Activated CD4-positive, alpha-beta memory T cell treated with anti-CD3 and anti-CD28 coated beads for 36 hours (primary cell): ENCODE measurements at regions of chr1 and their contacts with region 1.

Region 1: GRCh38 chr1:18913065-18913835 is 10.9 kb upstream of the ALDH4A1 start:
- DNase-seq: peak; percentile 84
- H3K4me3 Mint-ChIP-seq: no peak overlapping the region
- H3K27ac Mint-ChIP-seq: peak overlapping the region; percentile 81
- H3K4me1 Mint-ChIP-seq: peaks cover 17% of the 10 kb centered on the region
- H3K27me3 Mint-ChIP-seq: no peaks in the 10 kb centered on the region

Region 2: GRCh38 chr1:18926315-18927081 is 13.2 kb after region 1 on chr1:
- CTCF ChIA-PET with region 1: interaction called, 147 read pairs
- POLR2A ChIA-PET with region 1: interaction called, 14 read pairs
- intact Hi-C with region 1: loop called (anchors 1 kb)
- DNase-seq: peak; percentile 94
- H3K4me3 Mint-ChIP-seq: peak overlapping the region; percentile 79
- H3K27ac Mint-ChIP-seq: peak overlapping the region; percentile 100
- H3K4me1 Mint-ChIP-seq: peaks cover 79% of the 10 kb centered on the region
- H3K27me3 Mint-ChIP-seq: no peaks in the 10 kb centered on the region

Region 3: GRCh38 chr1:18956369-18957135 is 43.3 kb after region 1 on chr1 and contains the start of gene IFFO2:
- CTCF ChIA-PET with region 1: interaction called, 60 read pairs
- POLR2A ChIA-PET with region 1: interaction called, 4 read pairs
- intact Hi-C with region 1: no loop called
- DNase-seq: peak; percentile 98
- H3K4me3 Mint-ChIP-seq: peak within 1 kb of the TSS; percentile 84
- H3K27ac Mint-ChIP-seq: peak within 1 kb of the TSS; percentile 71
- H3K4me1 Mint-ChIP-seq: peaks cover 44% of the 10 kb centered on the region
- H3K27me3 Mint-ChIP-seq: peaks cover 2% of the 10 kb centered on the region
- total RNA-seq, gene IFFO2: 40.4 to 42.0 TPM

Region 4: GRCh38 chr1:18972531-18972930 is 59.3 kb after region 1 on chr1:
- CTCF ChIA-PET with region 1: interaction called, 35 read pairs
- POLR2A ChIA-PET with region 1: no interaction called
- intact Hi-C with region 1: no loop called
- DNase-seq: no peak
- H3K4me3 Mint-ChIP-seq: no peak overlapping the region
- H3K27ac Mint-ChIP-seq: no peak overlapping the region
- H3K4me1 Mint-ChIP-seq: peaks cover 9% of the 10 kb centered on the region
- H3K27me3 Mint-ChIP-seq: peaks cover 12% of the 10 kb centered on the region

Region 5: GRCh38 chr1:19087737-19088594 is 174.7 kb after region 1 on chr1:
- CTCF ChIA-PET with region 1: interaction called, 21 read pairs
- POLR2A ChIA-PET with region 1: no interaction called
- intact Hi-C with region 1: loop called (anchors 5 kb)
- DNase-seq: peak; percentile 37
- H3K4me3 Mint-ChIP-seq: no peak overlapping the region
- H3K27ac Mint-ChIP-seq: peak overlapping the region; percentile 69
- H3K4me1 Mint-ChIP-seq: peaks cover 29% of the 10 kb centered on the region
- H3K27me3 Mint-ChIP-seq: no peaks in the 10 kb centered on the region

Region 6: GRCh38 chr1:19113697-19114092 is 200.4 kb after region 1 on chr1:
- CTCF ChIA-PET with region 1: interaction called, 27 read pairs
- POLR2A ChIA-PET with region 1: no interaction called
- intact Hi-C with region 1: no loop called
- DNase-seq: peak; percentile 48
- H3K4me3 Mint-ChIP-seq: no peak overlapping the region
- H3K27ac Mint-ChIP-seq: no peak overlapping the region
- H3K4me1 Mint-ChIP-seq: no peaks in the 10 kb centered on the region
- H3K27me3 Mint-ChIP-seq: no peaks in the 10 kb centered on the region